ENCODE measurements at regions of chr14 and their contacts with region 1.

Region 1: GRCh38 chr14:23186913-23187654 is 3.6 kb upstream of the SLC7A8 start:
- DNase-seq: peak; percentile 63
- H3K4me3 ChIP-seq: no peak overlapping the region; a peak in 1 of 4 replicates
- H3K27ac ChIP-seq: no peak overlapping the region
- H3K4me1 ChIP-seq: peaks cover 0 to 2% of the 10 kb centered on the region in 2 experiments; a peak in 1 of 4 replicates
- H3K27me3 ChIP-seq: peaks cover 20% of the 10 kb centered on the region
- CTCF ChIP-seq: peak; percentile 85
- EP300 ChIP-seq: no peak
- RAD21 ChIP-seq: peak; percentile 91

Region 2: GRCh38 chr14:23130871-23131270 is 56.2 kb before region 1 on chr14:
- CTCF ChIA-PET with region 1: interaction called, 495 read pairs
- POLR2A ChIA-PET with region 1: no interaction called
- DNase-seq: no peak
- H3K4me3 ChIP-seq: no peak overlapping the region
- H3K27ac ChIP-seq: no peak overlapping the region
- H3K4me1 ChIP-seq: no peaks in the 10 kb centered on the region
- H3K27me3 ChIP-seq: peaks cover 6% of the 10 kb centered on the region; the same call in 1 of the 2 replicates
- CTCF ChIP-seq: no peak
- EP300 ChIP-seq: no peak
- RAD21 ChIP-seq: no peak

Region 3: DNA sequence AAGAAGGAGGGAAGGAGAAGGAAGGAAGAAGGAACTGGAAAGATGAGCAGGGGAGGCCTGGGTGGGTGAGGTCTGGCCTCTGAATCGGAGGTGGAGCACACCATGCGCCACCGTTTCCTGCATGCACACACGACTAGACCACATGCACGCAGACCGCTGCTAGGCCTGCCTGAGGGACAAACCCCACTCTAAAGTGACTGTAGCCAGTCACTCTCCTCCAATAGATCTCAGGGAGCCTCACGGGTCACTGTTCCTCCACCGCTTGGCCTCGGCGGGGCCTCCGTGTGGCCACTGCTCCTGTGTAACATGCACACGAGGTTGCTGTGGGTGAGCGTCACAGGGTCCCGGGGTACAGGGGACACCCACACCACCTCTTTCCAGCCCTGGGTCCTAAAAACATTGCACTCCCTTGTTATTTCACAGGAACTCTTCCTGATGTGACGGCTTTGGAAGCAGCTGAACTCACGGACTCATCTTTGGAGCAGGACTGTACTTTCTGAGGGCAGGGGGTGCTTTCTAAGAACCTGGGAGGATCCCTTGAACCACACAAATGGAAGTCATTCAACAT is 50.4 kb before region 1 on chr14:
- CTCF ChIA-PET with region 1: interaction called, 14 read pairs
- POLR2A ChIA-PET with region 1: no interaction called
- DNase-seq: no peak
- H3K4me3 ChIP-seq: no peak overlapping the region
- H3K27ac ChIP-seq: no peak overlapping the region
- H3K4me1 ChIP-seq: no peaks in the 10 kb centered on the region
- H3K27me3 ChIP-seq: no peaks in the 10 kb centered on the region; the same call in 1 of the 2 replicates
- CTCF ChIP-seq: no peak
- EP300 ChIP-seq: no peak
- RAD21 ChIP-seq: no peak

Region 4: GRCh38 chr14:23141671-23142451 is 45.2 kb before region 1 on chr14:
- CTCF ChIA-PET with region 1: interaction called, 11 read pairs
- POLR2A ChIA-PET with region 1: no interaction called
- DNase-seq: peak; percentile 39
- H3K4me3 ChIP-seq: no peak overlapping the region
- H3K27ac ChIP-seq: no peak overlapping the region
- H3K4me1 ChIP-seq: no peaks in the 10 kb centered on the region; a peak in 1 of 4 replicates
- H3K27me3 ChIP-seq: no peaks in the 10 kb centered on the region; the same call in 1 of the 2 replicates
- CTCF ChIP-seq: no peak
- EP300 ChIP-seq: no peak
- RAD21 ChIP-seq: no peak

Region 5: DNA sequence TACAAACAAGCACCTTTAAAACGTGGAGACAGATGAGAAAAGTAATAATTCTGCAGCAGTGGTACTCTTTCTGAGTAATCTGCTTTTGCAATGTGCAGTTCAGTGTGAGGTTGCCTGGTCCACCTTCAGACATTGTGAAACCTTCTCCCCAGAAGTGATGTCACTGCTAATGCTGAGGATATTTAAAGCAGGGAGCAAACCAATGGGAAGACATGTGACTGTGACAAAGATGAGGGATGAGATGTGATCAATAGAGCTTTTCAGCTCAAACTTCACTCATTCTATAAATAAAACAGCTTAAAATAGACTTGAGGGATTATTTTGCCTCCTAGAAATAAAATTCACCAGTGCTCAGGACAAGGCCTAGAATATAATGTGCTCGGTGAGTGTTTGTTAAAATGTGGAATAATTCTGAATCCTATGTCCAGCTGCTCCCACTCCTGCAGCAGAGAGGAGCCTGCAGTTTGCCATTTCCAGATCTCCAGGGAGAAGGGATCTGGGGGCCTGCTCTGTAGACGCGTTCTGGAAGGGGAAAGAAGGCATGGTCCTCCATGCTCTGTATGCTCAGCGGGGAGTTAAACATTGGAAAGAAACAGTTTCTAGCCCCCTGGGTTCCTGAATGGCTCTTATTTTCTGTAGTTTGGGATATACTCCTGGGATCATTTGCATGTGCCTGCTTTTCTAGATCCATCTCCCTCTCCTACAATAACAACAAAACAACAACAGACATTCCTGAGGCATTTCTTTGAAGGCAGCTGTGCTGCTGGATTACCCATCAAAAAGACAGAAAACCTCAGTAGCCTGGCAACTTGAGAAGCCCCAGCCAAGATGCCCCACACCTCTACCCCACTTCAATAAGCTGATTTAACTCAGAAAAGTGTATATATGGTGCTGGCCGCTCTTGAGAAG is 12.6 kb before region 1 on chr14:
- CTCF ChIA-PET with region 1: interaction called, 48 read pairs
- POLR2A ChIA-PET with region 1: no interaction called
- DNase-seq: no peak
- H3K4me3 ChIP-seq: no peak overlapping the region
- H3K27ac ChIP-seq: no peak overlapping the region
- H3K4me1 ChIP-seq: no peaks in the 10 kb centered on the region
- H3K27me3 ChIP-seq: peaks cover 12% of the 10 kb centered on the region; the same call in 1 of the 2 replicates
- CTCF ChIP-seq: no peak
- EP300 ChIP-seq: no peak
- RAD21 ChIP-seq: no peak

Region 6: GRCh38 chr14:23208324-23208723 is 21.2 kb after region 1 on chr14:
- CTCF ChIA-PET with region 1: interaction called, 24 read pairs
- POLR2A ChIA-PET with region 1: no interaction called
- DNase-seq: no peak
- H3K4me3 ChIP-seq: no peak overlapping the region
- H3K27ac ChIP-seq: no peak overlapping the region
- H3K4me1 ChIP-seq: no peaks in the 10 kb centered on the region
- H3K27me3 ChIP-seq: peaks cover 46% of the 10 kb centered on the region; the same call in 1 of the 2 replicates
- CTCF ChIP-seq: no peak
- EP300 ChIP-seq: no peak
- RAD21 ChIP-seq: no peak

Measured in SK-N-SH (cell line).